Endothelial cell of umbilical vein (primary cell): ENCODE measurements at regions of chr11 and their contacts with region 1.

Region 1: GRCh38 chr11:18321980-18322711 is at the starts of genes GTF2H1 and HPS5:
- DNase-seq: peak; percentile 98
- H3K4me3 ChIP-seq: peak within 1 kb of the TSS; percentile 60 to 90 (median 63)
- H3K27ac ChIP-seq: peak within 1 kb of the TSS; percentile 79
- H3K4me1 ChIP-seq: peaks cover 31% of the 10 kb centered on the region
- H3K27me3 ChIP-seq: no peaks in the 10 kb centered on the region
- CTCF ChIP-seq: no peak
- POLR2A ChIP-seq: peak; percentile 98
- total RNA-seq, gene GTF2H1: 44.4 and 47.7 TPM in 2 replicates
- total RNA-seq, gene HPS5: 14.1 and 15.6 TPM in 2 replicates

Region 2: DNA sequence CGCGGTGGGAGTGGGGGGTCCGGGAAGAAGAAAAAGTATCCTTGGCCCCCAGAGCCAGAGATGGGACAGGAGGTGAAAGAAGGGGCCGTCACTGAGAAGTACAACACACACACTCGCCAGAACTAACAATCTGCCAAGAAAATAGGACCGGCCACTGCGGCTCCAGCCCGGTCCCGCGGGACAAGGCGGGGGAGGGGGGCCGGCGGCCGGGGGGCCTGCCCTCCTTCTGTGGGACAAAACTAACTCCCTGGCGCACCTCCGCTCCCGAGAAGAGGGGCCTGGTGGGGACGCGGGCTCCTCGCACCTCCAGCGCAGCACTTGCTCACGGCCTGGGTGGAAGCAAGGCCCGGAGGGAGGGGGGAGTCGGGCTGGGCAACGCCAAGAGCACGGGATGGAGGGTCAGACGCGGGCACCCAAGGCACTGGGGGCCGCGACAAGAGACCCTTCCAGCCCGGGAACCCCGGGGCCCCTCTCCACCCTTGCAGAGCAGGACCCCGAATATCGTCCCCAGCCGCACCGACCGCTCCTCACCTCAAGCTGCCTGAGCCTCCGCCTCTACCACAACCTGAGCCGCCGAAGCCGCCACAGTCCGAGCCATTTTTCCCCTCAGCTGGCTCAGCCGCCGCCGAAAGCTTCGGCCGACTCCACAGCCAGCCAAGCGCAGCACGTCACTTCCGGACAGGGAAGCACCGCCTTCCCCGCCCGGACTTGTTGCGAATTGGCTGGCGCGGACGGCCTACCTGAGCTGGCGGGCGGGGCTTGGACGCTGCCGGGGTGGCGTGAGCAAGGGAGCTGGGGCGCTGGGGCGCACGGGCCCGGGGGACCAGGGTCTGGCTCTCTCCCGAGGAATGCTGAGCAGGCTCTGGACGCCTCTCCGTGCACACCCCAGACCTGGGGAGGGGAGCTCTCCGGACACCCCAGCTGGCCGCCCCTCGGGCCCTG is 1114.6 kb before region 1 on chr11 and contains the start of gene PIK3C2A:
- CTCF ChIA-PET with region 1: no interaction called
- POLR2A ChIA-PET with region 1: no interaction called
- dilution Hi-C with region 1: no loop called
- intact Hi-C with region 1: loop called (anchors 5 kb)
- DNase-seq: peak; percentile 91
- H3K4me3 ChIP-seq: peak within 1 kb of the TSS; percentile 62 to 99 (median 98)
- H3K27ac ChIP-seq: peak within 1 kb of the TSS; percentile 98
- H3K4me1 ChIP-seq: peaks cover 28% of the 10 kb centered on the region
- H3K27me3 ChIP-seq: no peaks in the 10 kb centered on the region
- CTCF ChIP-seq: no peak
- POLR2A ChIP-seq: peak; percentile 96
- total RNA-seq, gene PIK3C2A: 142 and 148 TPM in 2 replicates

Region 3: DNA sequence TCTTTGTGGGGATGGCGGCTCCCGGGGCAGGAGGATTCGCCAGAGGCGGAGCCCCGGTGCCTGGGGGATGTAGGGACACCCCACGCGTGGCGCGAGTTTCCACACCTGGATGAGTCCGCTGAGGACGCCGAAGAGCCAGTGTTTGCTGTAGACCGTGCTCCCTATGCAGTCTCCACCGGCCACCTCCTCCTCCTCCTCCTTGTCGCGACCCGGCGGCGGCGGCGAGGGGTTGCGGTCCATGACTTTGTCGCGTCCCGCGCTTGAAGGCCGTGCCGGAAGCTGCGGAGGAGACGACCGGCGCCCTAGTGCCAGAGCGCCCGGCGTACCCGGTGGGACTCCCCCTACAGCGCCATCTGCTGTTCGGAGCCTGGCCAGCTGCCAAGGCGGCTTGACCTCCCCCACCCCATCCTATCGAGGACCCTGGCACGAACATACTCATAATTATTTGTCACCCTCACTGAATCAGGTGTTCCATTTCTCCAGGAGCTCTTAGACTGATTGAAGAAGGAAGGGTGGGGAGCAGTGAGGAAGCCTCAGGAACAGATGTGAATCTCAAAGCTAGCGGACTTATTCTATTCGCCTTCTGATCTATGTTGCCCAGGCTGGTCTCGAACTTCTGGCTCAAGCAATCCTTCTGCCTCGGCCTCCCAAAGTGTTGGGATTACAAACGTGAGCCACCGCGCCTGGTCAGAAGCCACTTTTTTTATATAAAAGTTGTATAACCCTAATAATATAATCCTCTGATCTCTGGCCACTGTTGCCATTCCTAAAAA is 216.2 kb before region 1 on chr11 and contains the start of gene SAAL1:
- CTCF ChIA-PET with region 1: no interaction called
- POLR2A ChIA-PET with region 1: no interaction called
- dilution Hi-C with region 1: no loop called
- intact Hi-C with region 1: loop called (anchors 5 kb)
- DNase-seq: peak; percentile 81
- H3K4me3 ChIP-seq: peak within 1 kb of the TSS; percentile 50 to 94 (median 92)
- H3K27ac ChIP-seq: peak within 1 kb of the TSS; percentile 14
- H3K4me1 ChIP-seq: peaks cover 7% of the 10 kb centered on the region
- H3K27me3 ChIP-seq: peaks cover 2 to 11% of the 10 kb centered on the region in 2 experiments
- CTCF ChIP-seq: peak; percentile 76 to 85
- POLR2A ChIP-seq: peak; percentile 61
- total RNA-seq, gene SAAL1: 22.1 and 24.2 TPM in 2 replicates

Region 4: GRCh38 chr11:18395735-18396504 is 73.8 kb after region 1 on chr11:
- CTCF ChIA-PET with region 1: interaction called, 13 read pairs
- POLR2A ChIA-PET with region 1: interaction called, 15 read pairs
- dilution Hi-C with region 1: no loop called
- intact Hi-C with region 1: loop called (anchors 1 kb)
- DNase-seq: peak; percentile 100
- H3K4me3 ChIP-seq: peak overlapping the region; percentile 42 to 80 (median 65)
- H3K27ac ChIP-seq: peak overlapping the region; percentile 56
- H3K4me1 ChIP-seq: peaks cover 18% of the 10 kb centered on the region
- H3K27me3 ChIP-seq: no peaks in the 10 kb centered on the region
- CTCF ChIP-seq: no peak
- POLR2A ChIP-seq: peak; percentile 83

Region 5: GRCh38 chr11:18588297-18589252 is 266.4 kb after region 1 on chr11 and contains the start of gene UEVLD:
- CTCF ChIA-PET with region 1: no interaction called
- POLR2A ChIA-PET with region 1: no interaction called
- dilution Hi-C with region 1: no loop called
- intact Hi-C with region 1: loop called (anchors 2 kb)
- DNase-seq: peak; percentile 88
- H3K4me3 ChIP-seq: peak within 1 kb of the TSS; percentile 91 to 98 (median 94)
- H3K27ac ChIP-seq: peak within 1 kb of the TSS; percentile 65
- H3K4me1 ChIP-seq: peaks cover 17% of the 10 kb centered on the region
- H3K27me3 ChIP-seq: no peaks in the 10 kb centered on the region
- CTCF ChIP-seq: no peak
- POLR2A ChIP-seq: peak; percentile 87
- total RNA-seq, gene UEVLD: 19.1 and 22.5 TPM in 2 replicates